Posterior cingulate gyrus (tissue), 11 donors: ENCODE measurements at regions of chr2 and their contacts with region 1.

Region 1: GRCh38 chr2:54081574-54081973 is 33.8 kb upstream of the ACYP2 start:
- DNase-seq: no peak

Region 2: GRCh38 chr2:53740170-53740569 is 341.4 kb before region 1 on chr2:
- intact Hi-C with region 1: no loop called
- DNase-seq: no peak

Region 3: DNA sequence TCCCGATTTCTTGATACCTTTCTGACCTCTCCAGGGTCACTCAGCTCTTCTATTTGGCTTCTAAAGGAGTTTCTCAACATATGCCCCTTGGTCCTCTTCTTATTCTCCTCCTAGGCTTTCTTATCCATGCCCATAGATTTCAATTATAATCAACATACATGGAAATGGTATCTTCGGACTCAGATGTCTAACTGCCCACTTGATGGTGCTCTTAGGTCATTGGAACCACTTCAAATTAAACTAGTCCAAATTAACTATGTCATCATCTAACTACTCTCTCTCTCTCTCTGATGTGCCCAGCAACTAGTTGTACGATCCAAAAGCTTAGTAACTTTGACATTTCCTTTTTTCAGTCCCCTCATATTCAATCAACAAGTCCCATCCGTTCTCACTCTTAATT is 178.6 kb before region 1 on chr2:
- intact Hi-C with region 1: loop called (anchors 10 kb)
- DNase-seq: no peak

Region 4: GRCh38 chr2:53970724-53971602 is 110.6 kb before region 1 on chr2 and contains the start of gene PSME4:
- intact Hi-C with region 1: loop called (anchors 10 kb)
- DNase-seq: peak; percentile 92 to 99 (median 94)